ENCODE measurements at regions of chr19 and their contacts with region 1.

Region 1: DNA sequence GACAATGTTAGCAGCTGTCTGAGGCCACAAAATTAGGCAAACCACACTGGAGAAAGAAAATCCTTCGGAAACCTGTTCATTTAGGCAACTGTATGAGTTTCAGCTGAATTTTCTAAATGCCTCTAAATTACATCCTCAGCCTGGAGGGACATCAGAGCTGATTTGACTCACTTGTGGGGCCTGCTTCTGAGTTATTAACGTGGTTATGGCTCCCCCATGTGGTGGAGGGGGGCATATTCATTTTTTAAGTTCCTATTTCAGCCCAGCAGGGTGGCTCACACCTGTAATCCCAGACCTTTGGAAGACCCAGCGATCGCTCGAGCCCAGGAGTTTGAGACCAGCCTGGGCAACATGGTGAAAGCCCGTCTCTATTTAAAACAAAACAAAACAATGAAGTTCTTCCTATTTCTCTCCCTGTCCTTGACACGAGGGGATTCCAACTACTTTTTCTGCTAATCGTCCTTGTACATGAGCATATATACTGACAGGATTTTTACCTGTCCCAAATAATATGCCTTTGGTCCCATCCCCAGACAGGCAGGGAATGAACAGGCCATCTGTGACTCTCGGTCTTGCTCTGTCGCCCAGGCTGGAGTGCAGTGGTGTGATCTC is 31.5 kb upstream of the HIF3A start:
- DNase-seq: no peak
- ATAC-seq: peak; percentile 89

Region 2: GRCh38 chr19:46030812-46031550 is 234.3 kb before region 1 on chr19:
- intact Hi-C with region 1: loop called (anchors 2 kb)
- DNase-seq: no peak
- ATAC-seq: no peak

Region 3: DNA sequence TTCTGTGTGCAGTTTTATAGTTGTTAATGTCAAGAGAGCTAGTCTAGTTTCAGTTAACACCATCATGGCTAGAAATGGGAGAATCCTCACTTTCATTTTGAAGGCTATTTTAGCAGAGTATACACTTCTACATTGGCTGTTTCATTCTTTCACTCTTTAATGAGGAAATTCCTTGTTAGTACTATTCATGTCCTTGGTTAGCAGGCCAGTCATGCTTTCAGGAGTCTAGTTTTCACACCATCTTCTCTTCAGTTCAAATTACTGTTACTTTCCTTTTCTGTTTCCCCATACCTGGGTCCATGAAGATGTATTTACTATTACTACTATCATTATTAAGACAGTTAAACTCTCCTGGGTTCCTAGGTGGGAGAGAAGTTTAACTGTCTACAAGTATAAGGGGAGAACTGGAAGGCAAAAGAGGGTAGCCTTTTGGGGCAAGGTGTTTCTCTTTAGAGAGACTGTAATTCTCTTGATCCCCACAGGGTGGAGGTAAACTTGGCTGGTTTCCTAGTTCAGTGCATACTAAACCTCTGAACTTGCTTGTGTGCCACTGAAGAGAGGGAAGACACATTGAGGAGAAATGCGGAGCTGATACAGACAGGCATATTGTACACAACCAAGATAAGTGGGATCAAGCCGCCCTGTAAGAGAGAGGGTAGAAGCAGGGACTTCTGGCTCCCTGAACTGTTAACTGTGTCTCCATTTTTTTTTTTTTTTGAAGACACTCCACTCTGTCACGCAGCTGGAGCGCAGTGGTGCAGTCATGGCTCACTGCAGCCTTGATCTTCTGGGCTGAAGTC is 183.2 kb before region 1 on chr19:
- intact Hi-C with region 1: loop called (anchors 5 kb)
- DNase-seq: no peak
- ATAC-seq: peak; percentile 47

Region 4: DNA sequence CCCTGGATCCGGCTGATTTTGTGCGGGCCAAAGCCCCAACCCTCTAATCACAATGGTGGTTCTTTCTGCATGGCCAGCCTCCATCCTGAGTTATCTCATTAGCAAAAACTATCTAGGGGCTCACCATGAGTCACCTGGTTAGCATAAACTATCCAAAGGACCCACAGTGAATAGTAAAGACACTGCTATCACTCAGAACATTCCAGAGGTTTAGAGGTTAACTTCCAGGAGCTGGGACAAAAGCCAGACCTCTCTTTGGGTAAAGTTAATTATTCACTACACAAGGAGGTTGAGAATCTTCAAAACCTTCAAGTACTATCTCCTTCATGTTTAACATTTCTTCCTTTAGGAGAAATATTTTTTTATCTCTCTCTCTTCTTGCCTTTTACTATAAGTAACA is 62.8 kb after region 1 on chr19:
- intact Hi-C with region 1: no loop called
- DNase-seq: no peak
- ATAC-seq: no peak